Activated CD4-positive, alpha-beta T cell treated with anti-CD3 and anti-CD28 coated beads, Interleukin-2, amount 10 ng/mL, durations not matched to agents 24 days and 14 days (primary cell): ENCODE measurements at regions of chr12 and their contacts with region 1.

Region 1: DNA sequence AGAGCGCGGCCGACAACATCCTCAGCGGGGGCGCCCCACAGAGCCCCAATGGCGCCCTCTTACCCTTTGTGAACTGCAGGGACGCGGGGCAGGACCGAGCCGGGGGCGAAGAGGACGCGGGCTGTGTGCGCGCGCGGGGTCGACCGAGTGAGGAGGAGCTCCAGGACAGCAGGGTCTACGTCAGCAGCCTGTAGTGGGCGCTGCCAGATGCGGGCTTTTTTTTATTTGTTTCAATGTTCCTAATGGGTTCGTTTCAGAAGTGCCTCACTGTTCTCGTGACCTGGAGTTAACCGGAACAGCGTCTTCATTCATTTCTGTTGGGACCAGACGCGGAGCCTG is 103.8 kb upstream of the FKBP4 start:
- DNase-seq: peak; percentile 89
- H3K4me3 Mint-ChIP-seq: peak overlapping the region; percentile 82
- H3K27ac Mint-ChIP-seq: peak overlapping the region; percentile 91
- H3K4me1 Mint-ChIP-seq: peaks cover 30% of the 10 kb centered on the region
- H3K27me3 Mint-ChIP-seq: peaks cover 3% of the 10 kb centered on the region

Region 2: GRCh38 chr12:2752676-2753371 is 61.8 kb after region 1 on chr12:
- intact Hi-C with region 1: loop called (anchors 2 kb)
- DNase-seq: peak; percentile 96
- H3K4me3 Mint-ChIP-seq: no peak overlapping the region
- H3K27ac Mint-ChIP-seq: no peak overlapping the region
- H3K4me1 Mint-ChIP-seq: no peaks in the 10 kb centered on the region
- H3K27me3 Mint-ChIP-seq: peaks cover 26% of the 10 kb centered on the region

Region 3: DNA sequence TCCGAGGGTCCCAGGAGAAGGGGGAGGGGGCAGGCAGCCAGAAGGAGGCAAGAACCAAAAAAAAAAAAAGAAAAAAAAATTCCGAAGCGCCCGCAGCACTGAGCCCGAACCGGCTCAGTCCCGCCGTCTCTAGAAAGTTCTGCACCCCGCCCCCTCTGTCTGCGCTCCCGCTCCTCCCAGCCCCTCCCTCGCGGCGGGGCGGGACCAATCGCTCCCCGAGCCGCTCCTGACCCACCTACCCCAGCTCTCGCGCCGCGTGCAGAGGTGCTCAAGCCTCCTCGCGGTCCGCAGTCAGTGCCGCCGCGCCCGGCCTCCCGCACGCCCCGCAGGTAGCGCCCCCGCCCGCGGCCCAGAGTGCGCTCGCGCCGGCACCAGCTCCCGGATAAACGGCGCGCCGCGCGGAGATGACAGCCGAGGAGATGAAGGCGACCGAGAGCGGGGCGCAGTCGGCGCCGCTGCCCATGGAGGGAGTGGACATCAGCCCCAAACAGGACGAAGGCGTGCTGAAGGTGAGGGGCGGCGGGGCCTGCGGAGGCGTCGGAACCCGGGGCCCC is 103.8 kb after region 1 on chr12 and contains the start of gene FKBP4:
- intact Hi-C with region 1: loop called (anchors 1 kb)
- DNase-seq: peak; percentile 97
- H3K4me3 Mint-ChIP-seq: peak within 1 kb of the TSS; percentile 86
- H3K27ac Mint-ChIP-seq: peak within 1 kb of the TSS; percentile 79
- H3K4me1 Mint-ChIP-seq: peaks cover 28% of the 10 kb centered on the region
- H3K27me3 Mint-ChIP-seq: peaks cover 19% of the 10 kb centered on the region
- total RNA-seq, gene FKBP4: 300 and 311 TPM in 2 replicates

Region 4: DNA sequence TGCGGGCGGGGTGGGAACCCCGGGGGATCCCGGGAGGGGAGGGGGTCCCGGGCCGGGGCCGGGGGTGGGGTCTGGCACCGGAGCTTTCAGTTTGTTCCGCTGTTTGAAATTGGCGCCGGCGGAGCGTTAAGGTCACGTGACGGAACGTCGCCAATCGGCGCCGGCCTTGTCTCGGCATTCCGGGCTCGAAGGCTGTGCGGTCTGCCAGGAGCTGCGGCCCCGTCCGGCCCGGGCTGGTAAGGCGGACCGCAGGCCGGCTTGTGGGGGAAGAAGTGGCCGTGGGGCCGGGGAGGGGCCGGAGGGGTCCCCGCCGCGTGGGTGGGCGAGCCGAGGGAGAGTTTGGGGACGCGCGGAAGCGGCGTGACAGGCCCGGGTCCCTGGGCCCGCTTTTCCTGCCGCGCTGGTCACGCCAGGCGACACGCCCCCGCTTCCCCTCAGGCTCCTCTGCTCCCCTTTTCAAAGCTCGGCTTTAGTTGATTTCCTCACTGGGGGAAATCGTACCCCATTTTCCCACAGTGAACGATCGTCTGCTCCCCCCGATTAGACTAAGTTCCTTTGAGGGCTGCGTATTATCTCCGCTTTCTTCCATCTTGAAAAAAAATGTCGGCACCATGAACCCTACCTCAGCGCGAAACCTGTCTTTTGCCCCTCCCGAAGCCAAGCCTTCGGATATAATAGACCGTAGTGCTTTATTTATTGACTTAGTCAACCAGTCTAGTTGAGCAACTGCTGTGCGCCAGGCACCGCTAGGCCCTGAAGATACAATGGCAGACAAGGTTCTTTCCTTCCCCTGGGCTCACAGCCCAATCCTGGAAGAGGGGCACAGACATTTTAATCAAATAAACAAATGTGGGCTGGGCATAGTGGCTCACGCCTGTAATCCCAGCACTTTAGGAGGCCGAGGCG is 186.3 kb after region 1 on chr12 and contains the starts of genes FOXM1 and RHNO1:
- intact Hi-C with region 1: loop called (anchors 5 kb)
- DNase-seq: peak; percentile 97
- H3K4me3 Mint-ChIP-seq: peak within 1 kb of the TSS; percentile 87
- H3K27ac Mint-ChIP-seq: peak within 1 kb of the TSS; percentile 98
- H3K4me1 Mint-ChIP-seq: peaks cover 44% of the 10 kb centered on the region
- H3K27me3 Mint-ChIP-seq: no peaks in the 10 kb centered on the region
- total RNA-seq, gene FOXM1: 73.7 and 74.0 TPM in 2 replicates
- total RNA-seq, gene RHNO1: 47.2 and 48.1 TPM in 2 replicates

Region 5: DNA sequence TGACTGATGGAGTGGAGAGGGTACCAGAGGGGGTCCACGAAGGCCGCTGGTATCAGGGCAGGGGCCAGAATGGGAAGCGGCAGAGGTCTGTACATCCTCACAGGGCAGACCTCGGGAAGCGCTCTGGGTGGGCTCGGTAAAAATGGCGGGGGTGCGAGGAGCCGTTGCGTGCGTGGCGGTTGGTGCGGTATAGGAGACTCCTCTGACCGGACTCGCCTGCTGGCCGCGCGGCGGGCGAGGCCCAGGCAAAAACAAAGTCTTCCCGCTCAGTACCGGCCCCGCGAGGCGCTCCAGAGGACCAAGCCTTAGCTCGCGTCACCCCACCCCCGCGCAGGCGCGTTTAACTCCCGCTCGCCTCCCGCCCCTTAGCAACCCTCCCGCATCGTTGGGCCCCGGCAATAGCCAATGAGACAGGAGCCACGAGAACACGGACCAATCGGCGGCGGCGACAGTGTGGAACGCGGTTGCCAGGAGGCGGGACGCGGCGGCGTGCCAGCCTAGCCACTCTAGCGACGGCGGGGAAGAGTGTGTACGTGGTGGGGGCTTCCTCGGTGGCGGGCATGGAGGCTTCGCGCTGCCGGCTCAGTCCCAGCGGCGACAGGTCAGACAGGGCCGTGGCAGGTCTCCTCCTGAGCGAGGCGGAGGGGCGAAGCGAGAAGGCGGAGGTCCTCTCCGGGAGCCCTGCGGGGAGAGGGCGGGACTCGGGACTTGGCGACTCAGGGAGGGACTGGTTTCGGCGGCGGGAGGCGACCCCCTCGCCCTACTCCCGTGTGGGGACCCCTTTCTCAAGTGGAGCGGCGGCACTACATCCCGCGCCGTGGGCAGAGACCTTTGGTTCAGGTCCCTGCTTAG is 199.6 kb after region 1 on chr12 and contains the start of gene TULP3:
- intact Hi-C with region 1: loop called (anchors 2 kb)
- DNase-seq: peak; percentile 99
- H3K4me3 Mint-ChIP-seq: peak within 1 kb of the TSS; percentile 99
- H3K27ac Mint-ChIP-seq: peak within 1 kb of the TSS; percentile 94
- H3K4me1 Mint-ChIP-seq: peaks cover 32% of the 10 kb centered on the region
- H3K27me3 Mint-ChIP-seq: peaks cover 3% of the 10 kb centered on the region
- total RNA-seq, gene TULP3: 7.6 and 7.8 TPM in 2 replicates